Gastrocnemius medialis (tissue), 4 donors: ENCODE measurements at regions of chr1 and their contacts with region 1.

Region 1: GRCh38 chr1:170670802-170671628 is 7.1 kb downstream of the PRRX1 start:
- DNase-seq: peak in 1 of 2 donors; percentile 58
- ATAC-seq: peak in 1 of 2 donors; percentile 8
- H3K4me3 ChIP-seq: peak overlapping the region; percentile 7 to 27 (median 16)
- H3K27ac ChIP-seq: peak overlapping the region; percentile 90 to 100 (median 96)
- H3K4me1 ChIP-seq: peaks cover 65 to 68% of the 10 kb centered on the region in 2 donors
- H3K27me3 ChIP-seq: no peaks in the 10 kb centered on the region
- CTCF ChIP-seq: peak; percentile 30 to 70 (median 61)
- POLR2A ChIP-seq: no peak

Region 2: DNA sequence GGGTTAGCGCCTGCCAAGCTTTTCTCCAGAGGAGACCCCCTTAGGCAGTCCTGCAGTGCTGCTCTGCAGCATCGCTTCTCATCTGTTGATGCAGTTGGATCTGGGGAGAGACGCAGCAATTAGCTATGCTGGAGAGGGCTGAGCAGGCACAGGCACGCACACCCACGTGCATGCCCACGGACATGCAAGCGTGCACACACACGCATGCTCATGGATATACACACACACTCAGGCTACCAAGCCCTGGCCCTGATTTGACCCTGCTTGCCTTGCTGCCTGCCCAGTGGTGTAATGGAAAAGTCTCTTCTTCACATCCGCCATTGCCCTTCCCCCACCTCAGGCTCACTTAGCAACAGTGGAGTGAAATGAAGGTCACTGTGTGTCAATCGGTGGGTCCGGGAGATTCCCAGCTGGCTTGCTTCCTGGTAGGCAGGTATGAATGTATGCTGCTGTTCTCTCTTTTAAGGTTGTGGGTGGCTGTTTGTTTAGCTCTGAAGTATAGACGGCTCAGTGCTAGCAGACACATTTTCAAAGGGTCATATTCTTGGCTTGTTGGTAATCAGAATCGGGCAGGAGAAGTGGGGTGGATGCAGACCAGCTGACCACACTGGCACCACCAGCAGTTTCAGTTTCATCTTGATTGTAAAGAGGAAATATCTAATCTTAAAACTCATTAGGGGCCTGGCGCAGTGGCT is 1555.0 kb before region 1 on chr1:
- in situ Hi-C with region 1: no loop called
- intact Hi-C with region 1: loop called (anchors 2 kb)
- DNase-seq: peak in 1 of 2 donors; percentile 89
- ATAC-seq: peak in 1 of 2 donors; percentile 37
- H3K4me3 ChIP-seq: peak overlapping the region in 3 of 4 donors; percentile 12 to 35 (median 26)
- H3K27ac ChIP-seq: peak overlapping the region; percentile 93 to 99 (median 96)
- H3K4me1 ChIP-seq: peaks cover 95 to 97% of the 10 kb centered on the region in 2 donors
- H3K27me3 ChIP-seq: no peaks in the 10 kb centered on the region
- CTCF ChIP-seq: no peak
- POLR2A ChIP-seq: no peak

Region 3: DNA sequence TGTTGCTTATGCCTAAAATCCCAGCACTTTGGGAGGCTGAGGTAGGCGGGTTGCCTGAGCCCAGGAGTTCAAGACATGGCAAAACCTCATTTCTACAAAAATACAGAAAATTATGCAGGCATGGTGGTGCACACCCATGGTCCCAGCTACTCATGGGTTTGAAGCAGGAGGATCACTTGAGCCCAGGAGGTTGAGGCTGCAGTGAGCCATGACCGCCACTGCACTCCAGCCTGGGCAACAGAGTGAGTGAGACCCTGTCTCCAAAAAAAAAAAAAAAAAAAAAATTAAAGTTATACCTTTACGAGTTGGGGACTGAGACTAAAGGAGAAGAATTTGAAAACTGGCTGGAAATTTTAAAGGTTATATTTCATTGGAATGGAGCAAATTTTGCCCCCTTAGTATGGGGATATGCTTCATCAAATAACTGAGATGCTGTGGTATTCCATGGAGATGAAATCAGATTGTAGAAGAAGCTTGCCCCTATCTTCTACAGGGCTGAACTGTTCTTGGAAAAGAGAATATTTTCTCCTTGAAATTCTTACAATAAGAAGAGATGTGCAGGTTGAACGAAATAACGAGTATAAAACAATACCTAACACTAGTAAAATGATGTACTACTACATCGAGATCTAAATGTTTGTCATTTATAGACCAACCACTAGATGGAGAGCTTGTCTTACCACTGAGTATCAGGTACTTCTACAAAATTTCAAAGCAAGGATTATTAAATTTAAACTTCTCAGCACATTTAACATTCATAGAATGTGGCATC is 742.4 kb before region 1 on chr1:
- in situ Hi-C with region 1: loop called in 1 of 4 experiments (anchors 25 kb)
- intact Hi-C with region 1: no loop called
- DNase-seq: no peak
- ATAC-seq: peak in 1 of 2 donors; percentile 33
- H3K4me3 ChIP-seq: no peak overlapping the region
- H3K27ac ChIP-seq: no peak overlapping the region
- H3K4me1 ChIP-seq: peaks cover 0 to 6% of the 10 kb centered on the region in 2 donors
- H3K27me3 ChIP-seq: no peaks in the 10 kb centered on the region
- CTCF ChIP-seq: peak; percentile 29 to 72 (median 60)
- POLR2A ChIP-seq: no peak

Region 4: DNA sequence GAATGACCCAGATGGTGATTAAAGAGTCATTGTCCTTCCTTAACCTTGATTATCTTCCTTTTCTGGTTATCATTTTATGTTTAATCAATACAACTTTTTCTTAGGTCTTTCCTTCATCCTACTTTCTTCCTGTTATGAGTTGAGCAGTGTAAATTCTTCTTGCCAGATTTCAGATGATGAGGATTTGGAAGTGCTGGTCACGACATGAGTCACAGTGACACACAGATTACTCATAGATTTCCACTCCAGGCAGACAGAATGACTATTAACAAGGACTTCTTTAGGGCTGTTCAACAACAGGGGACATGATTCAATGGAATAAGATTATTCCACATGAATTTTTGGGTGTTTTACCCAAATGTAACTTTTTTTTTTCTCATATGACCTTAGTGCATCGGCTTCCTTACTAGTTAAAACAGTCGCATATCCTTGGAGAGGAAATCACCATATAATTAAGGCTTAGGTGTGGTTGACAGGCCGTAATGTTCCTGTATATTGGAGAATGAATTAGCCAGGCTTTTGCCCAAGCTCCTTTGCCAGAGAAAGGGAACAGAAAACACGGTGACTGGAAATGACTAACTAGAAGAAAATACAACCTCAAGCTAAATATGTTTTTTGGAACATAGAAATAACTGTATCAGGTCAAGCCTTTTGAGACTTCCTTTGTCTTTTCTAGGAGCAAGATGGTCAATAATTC is 37.1 kb after region 1 on chr1:
- in situ Hi-C with region 1: no loop called
- intact Hi-C with region 1: loop called (anchors 1 kb)
- DNase-seq: peak in 1 of 2 donors; percentile 25
- ATAC-seq: peak; percentile 95 to 96
- H3K4me3 ChIP-seq: no peak overlapping the region
- H3K27ac ChIP-seq: peak overlapping the region; percentile 82 to 86 (median 85)
- H3K4me1 ChIP-seq: peaks cover 35 to 48% of the 10 kb centered on the region in 2 donors
- H3K27me3 ChIP-seq: no peaks in the 10 kb centered on the region
- CTCF ChIP-seq: no peak
- POLR2A ChIP-seq: no peak

Region 5: DNA sequence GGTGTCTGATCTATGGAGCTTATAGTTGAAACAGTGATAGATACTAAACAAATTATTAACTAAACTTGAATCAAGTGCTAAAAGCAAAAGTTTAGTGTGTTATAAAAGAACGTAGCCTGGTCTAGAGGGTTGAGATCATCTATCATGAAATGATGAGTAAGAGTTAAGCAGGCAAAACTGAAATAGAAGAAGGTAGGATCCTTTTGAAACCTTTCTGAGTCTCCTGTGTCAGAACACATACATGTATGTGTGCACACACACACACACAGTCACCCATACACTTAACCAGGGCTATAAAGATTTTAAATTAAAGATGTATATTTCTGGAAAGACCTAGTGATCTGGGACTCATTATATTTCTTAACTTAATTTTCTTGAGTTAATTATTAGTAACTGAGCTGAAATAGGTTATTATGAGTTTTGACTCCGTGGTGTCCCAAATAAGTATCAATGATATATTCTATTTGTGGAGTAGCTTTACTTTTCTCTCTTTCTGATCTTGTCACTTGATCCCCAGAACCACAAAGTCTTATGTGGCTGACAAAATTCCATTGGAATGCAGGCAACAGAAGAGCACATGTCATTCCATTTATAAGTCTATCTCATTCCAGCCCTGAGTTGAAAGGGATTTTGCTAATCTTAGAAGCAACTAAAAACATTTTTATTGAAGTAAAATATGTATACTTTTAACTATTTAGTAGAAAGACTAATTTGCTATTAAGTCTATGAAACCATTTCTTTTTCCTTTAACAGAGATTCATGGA is 63.6 kb after region 1 on chr1:
- in situ Hi-C with region 1: no loop called
- intact Hi-C with region 1: loop called (anchors 2 kb)
- DNase-seq: no peak
- ATAC-seq: peak; percentile 58 to 67
- H3K4me3 ChIP-seq: no peak overlapping the region
- H3K27ac ChIP-seq: peak overlapping the region; percentile 85 to 95 (median 90)
- H3K4me1 ChIP-seq: peaks cover 69 to 74% of the 10 kb centered on the region in 2 donors
- H3K27me3 ChIP-seq: no peaks in the 10 kb centered on the region
- CTCF ChIP-seq: no peak
- POLR2A ChIP-seq: peak in 1 of 2 donors; percentile 20

Region 6: DNA sequence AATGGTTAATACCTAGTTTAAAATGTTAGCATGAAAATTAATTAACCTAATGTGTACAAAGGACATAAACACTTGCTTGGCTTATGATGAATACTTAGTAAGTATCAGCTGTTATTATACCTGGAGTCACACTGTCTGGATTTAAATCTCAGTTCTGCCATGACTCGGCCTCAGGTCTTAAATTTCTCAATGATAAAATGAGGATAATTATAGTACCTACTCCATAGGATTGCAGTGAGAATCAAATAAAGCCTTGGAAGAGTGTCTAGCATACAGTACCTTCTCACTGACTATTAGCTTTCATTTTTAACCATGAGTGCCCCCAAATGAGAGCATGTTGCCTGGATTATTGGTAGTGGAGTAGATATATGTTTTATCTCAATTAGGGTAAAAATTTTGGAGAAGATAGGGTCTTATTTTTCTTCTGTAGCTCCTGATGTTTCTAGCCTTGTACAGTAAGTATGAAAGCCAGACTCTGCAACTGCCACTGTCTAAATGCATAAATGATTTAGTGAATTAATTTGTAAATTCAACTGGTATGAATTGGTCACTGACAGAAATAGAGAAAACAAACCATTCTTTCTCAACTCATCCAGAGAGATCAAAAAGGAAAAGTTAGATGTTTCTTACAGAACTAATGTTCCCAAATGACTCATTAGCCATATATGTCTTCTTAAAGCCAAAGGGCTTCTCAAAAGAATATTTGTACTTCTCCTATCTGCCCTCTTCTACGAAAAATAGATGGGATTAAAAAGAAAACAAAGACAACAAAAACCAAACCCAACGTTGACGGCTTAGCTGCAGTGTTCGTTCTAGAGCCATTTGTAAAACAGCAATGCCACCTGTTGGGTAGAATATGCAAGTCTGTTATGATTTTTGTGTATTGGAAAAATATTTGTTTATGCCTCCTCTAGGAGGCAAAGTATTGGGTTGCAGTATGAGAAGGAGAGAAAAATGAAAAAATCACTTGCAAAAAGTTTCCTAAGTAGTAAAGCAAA is 210.6 kb after region 1 on chr1:
- in situ Hi-C with region 1: loop called in 1 of 4 experiments (anchors 25 kb)
- intact Hi-C with region 1: no loop called
- DNase-seq: no peak
- ATAC-seq: peak; percentile 65 to 74
- H3K4me3 ChIP-seq: peak overlapping the region; percentile 13 to 33 (median 25)
- H3K27ac ChIP-seq: peak overlapping the region in 1 of 4 donors; percentile 32
- H3K4me1 ChIP-seq: peaks cover 0 to 3% of the 10 kb centered on the region in 2 donors
- H3K27me3 ChIP-seq: no peaks in the 10 kb centered on the region
- CTCF ChIP-seq: peak; percentile 38 to 61 (median 56)
- POLR2A ChIP-seq: no peak